Activated CD4-positive, alpha-beta T cell treated with anti-CD3 and anti-CD28 coated beads for 36 hours (primary cell): ENCODE measurements at regions of chr9 and their contacts with region 1.

Region 1: GRCh38 chr9:3768698-3769458 is 243.1 kb upstream of the RFX3 start:
- DNase-seq: no peak
- ATAC-seq: no peak
- H3K4me3 Mint-ChIP-seq: no peak overlapping the region
- H3K27ac Mint-ChIP-seq: no peak overlapping the region
- H3K4me1 Mint-ChIP-seq: no peaks in the 10 kb centered on the region
- H3K27me3 Mint-ChIP-seq: peaks cover 18% of the 10 kb centered on the region

Region 2: DNA sequence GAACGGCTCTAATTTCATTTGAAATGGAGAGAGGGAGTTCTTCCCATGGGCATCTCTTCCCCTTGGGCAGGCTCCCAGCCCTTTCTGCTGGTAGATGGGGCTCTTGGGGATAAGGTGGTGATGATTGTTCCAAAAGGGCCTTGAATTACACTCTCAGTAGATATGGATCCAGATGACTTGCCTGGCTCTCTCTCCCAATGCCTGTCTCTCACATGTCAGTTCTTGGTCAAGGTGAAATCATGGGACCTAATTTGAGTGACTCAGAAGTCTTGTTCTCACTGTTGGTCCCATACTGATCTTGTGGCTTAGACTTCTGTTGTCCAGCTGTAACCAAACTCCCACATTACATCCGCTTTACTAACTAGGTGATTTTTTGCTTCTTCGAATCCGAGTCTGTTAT is 74.0 kb after region 1 on chr9:
- CTCF ChIA-PET with region 1: no interaction called
- POLR2A ChIA-PET with region 1: no interaction called
- intact Hi-C with region 1: no loop called
- DNase-seq: no peak
- ATAC-seq: no peak
- H3K4me3 Mint-ChIP-seq: no peak overlapping the region
- H3K27ac Mint-ChIP-seq: no peak overlapping the region
- H3K4me1 Mint-ChIP-seq: no peaks in the 10 kb centered on the region
- H3K27me3 Mint-ChIP-seq: peaks cover 4% of the 10 kb centered on the region

Region 3: GRCh38 chr9:3898461-3899218 is 129.8 kb after region 1 on chr9:
- CTCF ChIA-PET with region 1: no interaction called
- POLR2A ChIA-PET with region 1: no interaction called
- intact Hi-C with region 1: loop called in 1 of 2 experiments (anchors 1 kb)
- DNase-seq: no peak
- ATAC-seq: no peak
- H3K4me3 Mint-ChIP-seq: no peak overlapping the region
- H3K27ac Mint-ChIP-seq: no peak overlapping the region
- H3K4me1 Mint-ChIP-seq: peaks cover 2% of the 10 kb centered on the region
- H3K27me3 Mint-ChIP-seq: peaks cover 5% of the 10 kb centered on the region